Panc1 (cell line): ENCODE measurements at regions of chr3 and their contacts with region 1.

Region 1: DNA sequence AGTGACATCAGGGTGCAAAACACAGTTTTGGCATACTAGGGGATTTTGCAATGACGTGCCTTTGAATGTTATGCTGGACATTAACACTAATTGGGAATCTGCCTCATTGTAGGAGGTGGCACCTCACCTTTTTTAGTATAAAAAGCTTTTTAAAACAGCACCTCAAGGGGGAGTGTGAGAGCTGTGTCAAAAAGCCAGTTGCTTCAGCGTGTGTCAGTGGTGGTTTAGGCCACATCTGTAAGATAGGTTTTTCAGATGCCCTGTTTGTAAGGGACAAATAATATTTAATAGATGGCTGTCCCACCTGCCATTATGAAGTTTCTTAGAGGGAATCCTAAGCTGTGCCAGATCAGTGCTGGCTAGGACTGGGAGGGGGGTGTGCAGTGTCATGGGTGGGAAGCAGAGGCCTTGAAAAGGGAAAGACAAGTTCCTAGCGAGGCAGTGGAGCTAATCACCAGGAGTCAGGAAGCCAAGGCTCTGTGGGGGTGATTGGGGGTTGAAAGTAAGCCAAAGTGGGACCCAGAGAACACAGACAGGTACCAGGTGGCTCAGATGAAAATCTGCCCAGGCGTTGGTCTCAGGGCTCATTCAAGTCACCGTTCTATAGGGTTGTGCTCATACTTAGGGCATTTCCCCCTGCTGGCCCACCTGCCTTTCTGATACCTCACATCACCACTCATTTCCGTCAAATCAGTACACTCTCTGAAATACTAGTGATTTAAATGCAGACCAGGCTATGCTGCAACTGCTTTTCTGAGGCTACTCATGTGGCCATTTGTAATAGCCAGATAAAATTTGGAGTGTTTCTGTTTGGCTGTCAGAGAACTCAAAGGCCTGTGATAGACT is 120.5 kb downstream of the BBX start:
- DNase-seq: no peak
- ATAC-seq: no peak
- H3K4me3 ChIP-seq: no peak overlapping the region
- H3K27ac ChIP-seq: no peak overlapping the region
- H3K4me1 ChIP-seq: no peaks in the 10 kb centered on the region
- H3K27me3 ChIP-seq: no peaks in the 10 kb centered on the region
- CTCF ChIP-seq: peak; percentile 60

Region 2: DNA sequence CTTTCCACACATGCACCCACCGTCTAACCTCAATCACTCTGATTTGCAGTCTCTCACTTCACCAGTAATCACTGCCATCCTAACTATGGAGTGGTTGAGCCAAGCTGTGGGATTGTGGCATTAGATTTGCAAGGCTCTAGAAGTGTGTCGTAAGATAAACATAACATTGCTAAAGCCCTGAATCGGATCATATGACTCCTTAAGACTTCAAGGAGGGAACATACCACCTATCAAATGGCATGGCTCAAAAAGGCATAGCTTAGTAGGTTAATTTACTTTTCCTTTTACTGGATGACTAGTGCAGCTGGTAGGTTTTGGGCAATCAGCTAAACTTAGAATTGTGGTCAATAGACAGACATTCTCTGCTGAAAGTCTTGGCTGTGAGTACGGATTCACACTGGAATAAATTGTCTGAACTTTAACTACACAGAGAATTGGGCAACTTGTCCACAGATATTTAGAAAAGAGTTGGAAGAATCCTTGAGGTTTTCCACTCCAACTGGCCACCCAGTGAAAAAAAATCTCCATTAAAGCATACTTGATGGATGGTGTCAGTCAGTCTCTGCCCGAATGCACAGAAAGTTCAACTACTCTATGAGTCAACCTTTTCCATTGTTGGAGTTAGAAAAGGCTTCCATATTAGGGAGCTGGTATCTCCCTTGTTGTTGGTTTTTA is 1297.8 kb before region 1 on chr3:
- CTCF ChIA-PET with region 1: no interaction called
- POLR2A ChIA-PET with region 1: no interaction called
- in situ Hi-C with region 1: no loop called
- intact Hi-C with region 1: no loop called
- DNase-seq: no peak
- ATAC-seq: no peak
- H3K4me3 ChIP-seq: no peak overlapping the region
- H3K27ac ChIP-seq: no peak overlapping the region
- H3K4me1 ChIP-seq: no peaks in the 10 kb centered on the region
- H3K27me3 ChIP-seq: no peaks in the 10 kb centered on the region
- CTCF ChIP-seq: no peak

Region 3: GRCh38 chr3:107660306-107660976 is 17.2 kb after region 1 on chr3:
- CTCF ChIA-PET with region 1: interaction called, 12 read pairs
- POLR2A ChIA-PET with region 1: no interaction called
- in situ Hi-C with region 1: no loop called
- intact Hi-C with region 1: no loop called
- DNase-seq: no peak
- ATAC-seq: no peak
- H3K4me3 ChIP-seq: no peak overlapping the region
- H3K27ac ChIP-seq: no peak overlapping the region
- H3K4me1 ChIP-seq: no peaks in the 10 kb centered on the region
- H3K27me3 ChIP-seq: no peaks in the 10 kb centered on the region
- CTCF ChIP-seq: peak; percentile 70; the same call in 1 of the 2 replicates

Region 4: DNA sequence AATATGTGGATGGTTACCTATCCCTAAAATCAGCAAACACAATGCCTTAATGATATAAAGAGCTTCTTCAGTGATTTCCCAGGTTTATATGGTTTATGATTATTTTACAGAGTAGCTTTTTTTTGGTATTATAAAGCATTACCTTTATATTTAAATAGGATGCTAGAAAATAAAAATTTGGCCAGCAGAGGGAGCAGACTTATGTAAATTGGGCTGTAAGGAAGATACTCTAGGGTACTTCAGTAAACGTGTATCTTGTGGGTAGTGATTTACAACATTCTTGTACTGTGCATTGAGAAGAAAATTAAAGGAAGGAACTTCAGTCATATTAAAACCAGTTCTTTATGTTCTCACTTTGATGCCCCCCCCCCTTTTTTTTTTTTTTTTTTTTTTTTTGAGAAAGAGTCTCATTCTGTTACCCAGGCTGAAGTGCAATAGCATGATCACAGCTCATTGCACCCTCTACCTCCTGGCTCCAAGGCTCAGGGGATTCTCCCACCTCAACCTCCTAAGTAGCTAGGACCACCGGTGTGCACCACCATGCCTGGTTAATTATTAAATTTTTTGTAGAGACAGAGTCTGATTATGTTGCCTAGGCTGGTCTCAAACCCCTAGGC is 47.4 kb after region 1 on chr3:
- CTCF ChIA-PET with region 1: interaction called, 14 read pairs
- POLR2A ChIA-PET with region 1: no interaction called
- in situ Hi-C with region 1: no loop called
- intact Hi-C with region 1: no loop called
- DNase-seq: peak; percentile 8
- ATAC-seq: peak; percentile 73; the same call in 1 of the 2 replicates
- H3K4me3 ChIP-seq: no peak overlapping the region
- H3K27ac ChIP-seq: no peak overlapping the region
- H3K4me1 ChIP-seq: no peaks in the 10 kb centered on the region; the same call in 1 of the 2 replicates
- H3K27me3 ChIP-seq: no peaks in the 10 kb centered on the region
- CTCF ChIP-seq: peak; percentile 70

Region 5: GRCh38 chr3:107753480-107753879 is 110.2 kb after region 1 on chr3:
- CTCF ChIA-PET with region 1: no interaction called
- POLR2A ChIA-PET with region 1: no interaction called
- in situ Hi-C with region 1: no loop called
- intact Hi-C with region 1: no loop called
- DNase-seq: peak; percentile 27
- ATAC-seq: peak; percentile 82
- H3K4me3 ChIP-seq: no peak overlapping the region
- H3K27ac ChIP-seq: no peak overlapping the region
- H3K4me1 ChIP-seq: no peaks in the 10 kb centered on the region
- H3K27me3 ChIP-seq: no peaks in the 10 kb centered on the region
- CTCF ChIP-seq: peak; percentile 72